Heart right ventricle (tissue), 16 donors: ENCODE measurements at regions of chr1 and their contacts with region 1.

Region 1: GRCh38 chr1:217534566-217534965 is 96.3 kb downstream of the GPATCH2 start:
- DNase-seq: no peak
- ATAC-seq: no peak
- H3K4me3 ChIP-seq: no peak overlapping the region
- H3K27ac ChIP-seq: no peak overlapping the region
- H3K4me1 ChIP-seq: peaks cover 0 to 4% (median 0%) of the 10 kb centered on the region in 9 donors
- H3K27me3 ChIP-seq: no peaks in the 10 kb centered on the region
- CTCF ChIP-seq: no peak

Region 2: DNA sequence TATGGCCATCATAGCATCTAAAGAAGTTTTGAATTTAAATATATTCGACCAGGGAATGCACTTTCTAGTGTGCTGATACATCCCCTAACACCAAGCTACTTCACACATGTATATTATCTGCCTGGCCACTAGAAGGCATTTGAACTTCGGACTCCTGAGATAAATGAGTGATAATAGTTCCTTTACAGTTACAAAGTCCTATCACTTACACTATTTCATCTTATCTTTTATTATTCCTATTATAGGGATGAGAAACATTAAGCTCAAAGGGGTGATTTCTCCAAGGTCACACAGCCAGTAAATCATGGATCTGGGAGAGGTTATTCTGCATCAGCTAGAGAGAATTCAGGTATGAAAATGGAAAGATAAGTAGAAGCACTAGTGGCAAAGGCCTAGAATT is 56.0 kb after region 1 on chr1:
- intact Hi-C with region 1: no loop called
- DNase-seq: no peak
- ATAC-seq: no peak
- H3K4me3 ChIP-seq: no peak overlapping the region
- H3K27ac ChIP-seq: no peak overlapping the region
- H3K4me1 ChIP-seq: no peaks in the 10 kb centered on the region
- H3K27me3 ChIP-seq: no peaks in the 10 kb centered on the region
- CTCF ChIP-seq: no peak

Region 3: GRCh38 chr1:217620814-217621213 is 86.2 kb after region 1 on chr1:
- intact Hi-C with region 1: loop called in 1 of 10 experiments (anchors 10 kb)
- DNase-seq: no peak
- ATAC-seq: no peak
- H3K4me3 ChIP-seq: no peak overlapping the region
- H3K27ac ChIP-seq: no peak overlapping the region
- H3K4me1 ChIP-seq: no peaks in the 10 kb centered on the region
- H3K27me3 ChIP-seq: no peaks in the 10 kb centered on the region
- CTCF ChIP-seq: no peak